Breast epithelium (tissue), 4 donors: ENCODE measurements at regions of chr10 and their contacts with region 1.

Region 1: GRCh38 chr10:11515596-11516430 is 95.6 kb downstream of the USP6NL start:
- DNase-seq: peak in 1 of 2 donors; percentile 46
- H3K4me3 ChIP-seq: no peak overlapping the region
- H3K27ac ChIP-seq: no peak overlapping the region
- H3K4me1 ChIP-seq: no peaks in the 10 kb centered on the region
- H3K27me3 ChIP-seq: no peaks in the 10 kb centered on the region
- CTCF ChIP-seq: peak; percentile 15 to 83 (median 81)
- POLR2A ChIP-seq: no peak

Region 2: DNA sequence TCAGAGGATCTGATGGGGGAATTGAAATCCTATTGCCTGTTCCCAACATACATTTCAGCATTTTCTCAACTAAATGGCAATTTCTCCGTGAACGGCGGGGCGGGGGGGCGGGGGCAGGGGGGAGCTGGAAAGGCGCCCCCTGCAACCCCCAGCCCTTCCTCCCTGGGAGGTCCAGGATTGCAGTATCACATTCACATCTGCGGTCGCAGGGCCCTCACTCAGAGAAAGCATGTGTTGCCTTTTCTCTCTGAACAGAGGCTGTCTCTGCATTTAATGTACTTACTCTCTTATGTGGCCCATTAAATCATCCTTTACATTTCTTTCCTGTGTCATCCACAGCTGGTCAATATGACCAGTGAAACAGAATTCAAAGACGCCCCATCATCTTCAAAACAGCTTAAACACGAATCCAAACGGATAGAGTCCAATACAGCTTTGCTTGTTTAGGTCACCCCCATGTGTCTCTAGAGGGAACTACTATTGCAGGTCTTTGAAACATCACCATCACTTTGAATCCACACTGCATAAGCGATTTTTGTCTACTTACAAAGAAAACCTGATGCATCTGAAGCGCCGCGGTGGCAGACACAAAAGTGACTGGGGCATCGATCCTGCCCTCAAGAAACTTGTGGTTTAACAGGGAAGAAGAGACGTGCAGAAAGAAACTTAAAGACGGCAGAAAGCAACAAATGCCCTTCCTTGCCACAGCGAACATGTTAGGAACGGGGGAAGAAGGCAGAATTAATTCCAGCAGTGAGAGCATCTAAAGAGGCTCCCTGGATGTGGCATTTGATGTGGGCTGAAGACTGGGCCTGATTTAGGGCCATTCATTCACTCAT is 209.3 kb after region 1 on chr10:
- intact Hi-C with region 1: loop called (anchors 5 kb)
- DNase-seq: no peak
- H3K4me3 ChIP-seq: no peak overlapping the region
- H3K27ac ChIP-seq: no peak overlapping the region
- H3K4me1 ChIP-seq: no peaks in the 10 kb centered on the region
- H3K27me3 ChIP-seq: no peaks in the 10 kb centered on the region
- CTCF ChIP-seq: peak; percentile 41 to 80 (median 80)
- POLR2A ChIP-seq: no peak